Heart left ventricle (tissue), 16 donors: ENCODE measurements at regions of chr12 and their contacts with region 1.

Region 1: DNA sequence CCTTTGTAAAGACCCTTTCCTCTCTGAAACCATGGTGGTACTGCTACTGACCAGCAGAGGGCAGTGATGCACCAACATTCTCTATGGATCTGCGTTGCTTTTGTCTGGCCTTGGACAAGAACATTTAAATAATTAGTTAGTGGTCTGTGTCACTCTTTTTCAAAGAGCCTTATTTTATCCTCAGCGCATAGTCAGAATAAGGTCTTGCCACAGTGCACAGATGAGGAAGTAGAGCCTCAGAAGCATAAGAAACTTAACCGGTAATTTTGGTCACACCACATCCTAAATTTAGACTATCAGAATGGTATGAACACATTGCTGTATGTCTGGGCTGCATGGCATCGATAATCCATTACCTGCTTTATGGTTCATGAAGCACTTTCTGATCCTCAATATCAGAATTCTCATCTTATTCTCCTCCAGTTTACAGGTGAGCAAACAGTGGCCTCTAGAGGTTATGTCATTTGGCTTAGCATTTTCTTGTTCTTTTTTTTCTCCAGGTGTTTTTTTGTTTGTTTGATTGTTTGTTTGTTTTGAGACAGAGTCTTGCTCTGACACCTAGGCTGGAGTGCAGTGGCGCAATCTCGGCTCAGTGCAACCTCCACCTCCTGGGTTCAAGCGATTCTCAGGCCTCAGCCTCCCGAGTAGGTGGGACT is 23.7 kb upstream of the IFT81 start:
- DNase-seq: peak in 4 of 5 donors; percentile 45 to 66 (median 64)
- ATAC-seq: peak; percentile 40 to 80 (median 70)
- H3K4me3 ChIP-seq: no peak overlapping the region
- H3K27ac ChIP-seq: peak overlapping the region in 3 of 12 donors; percentile 17 to 43 (median 41)
- H3K4me1 ChIP-seq: peaks cover 0 to 16% (median 5%) of the 10 kb centered on the region in 12 donors
- H3K27me3 ChIP-seq: no peaks in the 10 kb centered on the region
- CTCF ChIP-seq: peak; percentile 81 to 96 (median 90)
- POLR2A ChIP-seq: no peak

Region 2: DNA sequence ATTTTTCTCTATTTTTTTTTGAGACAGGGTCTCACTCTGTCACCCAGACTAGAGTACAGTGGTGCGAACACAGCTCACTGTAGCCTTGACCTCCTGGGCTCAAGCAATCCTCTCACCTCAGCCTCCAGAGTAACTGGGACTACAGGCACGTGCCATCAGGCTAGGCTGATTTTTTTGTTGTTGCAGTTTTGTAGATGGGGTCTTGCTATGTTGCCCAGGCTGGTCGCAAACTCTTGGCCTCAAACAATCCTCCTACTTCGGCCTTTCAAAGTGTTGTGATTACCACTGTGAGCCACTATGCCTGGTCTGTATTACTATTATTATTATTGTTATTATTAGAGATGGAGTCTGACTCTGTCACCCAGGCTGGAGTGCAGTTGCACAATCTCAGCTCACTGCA is 127.6 kb before region 1 on chr12:
- intact Hi-C with region 1: no loop called
- DNase-seq: no peak
- ATAC-seq: no peak
- H3K4me3 ChIP-seq: no peak overlapping the region
- H3K27ac ChIP-seq: no peak overlapping the region
- H3K4me1 ChIP-seq: peaks cover 0 to 26% (median 0%) of the 10 kb centered on the region in 12 donors
- H3K27me3 ChIP-seq: no peaks in the 10 kb centered on the region
- CTCF ChIP-seq: no peak
- POLR2A ChIP-seq: no peak

Region 3: DNA sequence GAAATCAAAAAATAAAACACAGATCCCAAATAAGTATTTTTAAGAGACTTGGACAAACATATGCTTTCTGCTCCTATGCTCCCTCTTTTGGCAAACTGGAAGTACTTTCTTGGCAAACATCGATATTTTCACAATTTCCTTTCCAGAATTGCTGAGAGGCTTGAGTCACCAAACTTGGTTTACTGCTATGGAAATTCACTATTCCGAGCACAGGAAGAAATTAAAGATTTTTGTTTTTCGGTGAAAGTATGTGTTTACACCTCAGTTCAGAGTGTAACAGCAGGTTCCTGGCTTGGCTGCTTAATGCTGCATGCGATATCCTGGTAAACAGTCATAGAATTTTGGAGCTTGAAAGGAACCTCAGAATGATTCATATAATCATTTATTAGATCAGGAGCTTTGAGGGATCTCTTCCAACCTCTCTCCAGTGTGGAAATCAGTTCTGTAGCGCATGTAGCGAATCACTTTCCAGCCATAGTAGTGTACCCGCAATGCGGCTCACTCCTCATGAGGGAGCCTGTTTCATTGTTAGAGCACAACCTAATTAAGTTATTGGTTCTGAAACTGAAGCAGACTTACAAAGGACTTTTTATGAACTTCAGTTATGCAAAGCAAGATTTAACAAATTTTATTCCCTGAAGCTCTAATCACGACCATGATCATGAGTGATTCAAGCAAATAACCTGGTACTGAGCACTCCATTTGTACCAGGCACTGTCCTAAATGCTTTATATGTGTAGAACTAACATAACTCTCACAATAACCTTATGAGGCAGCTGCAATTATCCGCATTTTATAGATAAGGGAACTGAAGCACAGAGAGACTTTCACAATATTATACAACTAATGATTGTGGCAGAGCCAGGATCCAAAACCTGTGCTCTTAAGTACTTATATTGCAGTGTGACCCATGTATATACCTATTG is 124.2 kb after region 1 on chr12:
- intact Hi-C with region 1: loop called in 3 of 10 experiments (anchors 2 to 10 kb)
- DNase-seq: no peak
- ATAC-seq: peak in 3 of 4 donors; percentile 55 to 67 (median 62)
- H3K4me3 ChIP-seq: peak overlapping the region in 9 of 12 donors; percentile 6 to 46 (median 22)
- H3K27ac ChIP-seq: peak overlapping the region in 11 of 12 donors; percentile 20 to 75 (median 68)
- H3K4me1 ChIP-seq: peaks cover 0 to 58% (median 22%) of the 10 kb centered on the region in 12 donors
- H3K27me3 ChIP-seq: no peaks in the 10 kb centered on the region
- CTCF ChIP-seq: peak; percentile 33 to 71 (median 56)
- POLR2A ChIP-seq: no peak

Region 4: GRCh38 chr12:110280779-110281548 is 180.5 kb after region 1 on chr12 and contains the start of gene ATP2A2:
- intact Hi-C with region 1: loop called in 5 of 10 experiments (anchors 10 kb)
- DNase-seq: peak; percentile 92 to 96 (median 92)
- ATAC-seq: peak; percentile 69 to 93 (median 84)
- H3K4me3 ChIP-seq: peak within 1 kb of the TSS; percentile 76 to 96 (median 92)
- H3K27ac ChIP-seq: peak within 1 kb of the TSS; percentile 91 to 100 (median 98)
- H3K4me1 ChIP-seq: peaks cover 0 to 51% (median 34%) of the 10 kb centered on the region in 12 donors
- H3K27me3 ChIP-seq: no peaks in the 10 kb centered on the region
- CTCF ChIP-seq: peak in 1 of 12 donors; percentile 1
- POLR2A ChIP-seq: peak; percentile 71 to 99
- total RNA-seq, gene ATP2A2: 1,194 to 2,963 (median 1,871) TPM

Region 5: GRCh38 chr12:110426406-110426805 is 326.0 kb after region 1 on chr12:
- intact Hi-C with region 1: loop called in 9 of 10 experiments (anchors 1 to 5 kb)
- DNase-seq: no peak
- ATAC-seq: no peak
- H3K4me3 ChIP-seq: no peak overlapping the region
- H3K27ac ChIP-seq: no peak overlapping the region
- H3K4me1 ChIP-seq: peaks cover 0 to 4% (median 0%) of the 10 kb centered on the region in 12 donors
- H3K27me3 ChIP-seq: no peaks in the 10 kb centered on the region
- CTCF ChIP-seq: no peak
- POLR2A ChIP-seq: no peak